ENCODE measurements at regions of chr12 and their contacts with region 1.

Region 1: GRCh38 chr12:94101738-94102660 is 46.4 kb upstream of the PLXNC1 start:
- DNase-seq: peak; percentile 93
- H3K4me3 Mint-ChIP-seq: peak overlapping the region; percentile 78
- H3K27ac Mint-ChIP-seq: peak overlapping the region; percentile 7
- H3K4me1 Mint-ChIP-seq: peaks cover 16% of the 10 kb centered on the region
- H3K27me3 Mint-ChIP-seq: no peaks in the 10 kb centered on the region

Region 2: GRCh38 chr12:92224685-92225331 is 1877.2 kb before region 1 on chr12:
- CTCF ChIA-PET with region 1: no interaction called
- intact Hi-C with region 1: no loop called
- DNase-seq: no peak
- H3K4me3 Mint-ChIP-seq: no peak overlapping the region
- H3K27ac Mint-ChIP-seq: no peak overlapping the region
- H3K4me1 Mint-ChIP-seq: peaks cover 14% of the 10 kb centered on the region
- H3K27me3 Mint-ChIP-seq: no peaks in the 10 kb centered on the region

Region 3: GRCh38 chr12:92987362-92987761 is 1114.6 kb before region 1 on chr12:
- CTCF ChIA-PET with region 1: interaction called, 11 read pairs
- intact Hi-C with region 1: loop called (anchors 1 kb)
- DNase-seq: no peak
- H3K4me3 Mint-ChIP-seq: peak overlapping the region; percentile 26
- H3K27ac Mint-ChIP-seq: peak overlapping the region; percentile 78
- H3K4me1 Mint-ChIP-seq: peaks cover 26% of the 10 kb centered on the region
- H3K27me3 Mint-ChIP-seq: no peaks in the 10 kb centered on the region

Region 4: GRCh38 chr12:93419388-93420034 is 682.5 kb before region 1 on chr12:
- CTCF ChIA-PET with region 1: interaction called, 5 read pairs
- intact Hi-C with region 1: loop called (anchors 5 kb)
- DNase-seq: no peak
- H3K4me3 Mint-ChIP-seq: no peak overlapping the region
- H3K27ac Mint-ChIP-seq: no peak overlapping the region
- H3K4me1 Mint-ChIP-seq: peaks cover 88% of the 10 kb centered on the region
- H3K27me3 Mint-ChIP-seq: no peaks in the 10 kb centered on the region

Region 5: GRCh38 chr12:93494096-93494495 is 607.9 kb before region 1 on chr12:
- CTCF ChIA-PET with region 1: no interaction called
- intact Hi-C with region 1: no loop called
- DNase-seq: no peak
- H3K4me3 Mint-ChIP-seq: no peak overlapping the region
- H3K27ac Mint-ChIP-seq: no peak overlapping the region
- H3K4me1 Mint-ChIP-seq: peaks cover 14% of the 10 kb centered on the region
- H3K27me3 Mint-ChIP-seq: no peaks in the 10 kb centered on the region

Region 6: GRCh38 chr12:93569656-93570551 is 532.1 kb before region 1 on chr12:
- CTCF ChIA-PET with region 1: interaction called, 152 read pairs
- intact Hi-C with region 1: loop called (anchors 1 kb)
- DNase-seq: peak; percentile 88
- H3K4me3 Mint-ChIP-seq: peak overlapping the region; percentile 83
- H3K27ac Mint-ChIP-seq: peak overlapping the region; percentile 81
- H3K4me1 Mint-ChIP-seq: peaks cover 15% of the 10 kb centered on the region
- H3K27me3 Mint-ChIP-seq: peaks cover 17% of the 10 kb centered on the region

Region 7: GRCh38 chr12:93773122-93773871 is 328.7 kb before region 1 on chr12:
- CTCF ChIA-PET with region 1: interaction called, 141 read pairs
- intact Hi-C with region 1: no loop called
- DNase-seq: peak; percentile 87
- H3K4me3 Mint-ChIP-seq: peak overlapping the region; percentile 71
- H3K27ac Mint-ChIP-seq: peak overlapping the region; percentile 86
- H3K4me1 Mint-ChIP-seq: peaks cover 39% of the 10 kb centered on the region
- H3K27me3 Mint-ChIP-seq: no peaks in the 10 kb centered on the region

Region 8: GRCh38 chr12:94074980-94075928 is 26.7 kb before region 1 on chr12:
- CTCF ChIA-PET with region 1: interaction called, 92 read pairs
- intact Hi-C with region 1: loop called (anchors 1 kb)
- DNase-seq: peak; percentile 60
- H3K4me3 Mint-ChIP-seq: no peak overlapping the region
- H3K27ac Mint-ChIP-seq: no peak overlapping the region
- H3K4me1 Mint-ChIP-seq: peaks cover 20% of the 10 kb centered on the region
- H3K27me3 Mint-ChIP-seq: no peaks in the 10 kb centered on the region